Activated CD8-positive, alpha-beta T cell treated with anti-CD3 and anti-CD28 coated beads for 36 hours (primary cell): ENCODE measurements at regions of chr11 and their contacts with region 1.

Region 1: GRCh38 chr11:123407130-123407995 is 22.7 kb upstream of the GRAMD1B start:
- DNase-seq: peak; percentile 80
- ATAC-seq: peak; percentile 74
- H3K4me3 Mint-ChIP-seq: peak overlapping the region; percentile 29
- H3K27ac Mint-ChIP-seq: no peak overlapping the region
- H3K4me1 Mint-ChIP-seq: peaks cover 13% of the 10 kb centered on the region
- H3K27me3 Mint-ChIP-seq: peaks cover 16% of the 10 kb centered on the region
- CTCF ChIP-seq: peak; percentile 77

Region 2: GRCh38 chr11:123301696-123302400 is 105.5 kb before region 1 on chr11:
- CTCF ChIA-PET with region 1: interaction called, 39 read pairs
- POLR2A ChIA-PET with region 1: no interaction called
- intact Hi-C with region 1: no loop called
- DNase-seq: peak; percentile 80
- ATAC-seq: peak; percentile 80
- H3K4me3 Mint-ChIP-seq: peak overlapping the region; percentile 12
- H3K27ac Mint-ChIP-seq: peak overlapping the region; percentile 77
- H3K4me1 Mint-ChIP-seq: peaks cover 37% of the 10 kb centered on the region
- H3K27me3 Mint-ChIP-seq: peaks cover 18% of the 10 kb centered on the region
- CTCF ChIP-seq: peak; percentile 87

Region 3: DNA sequence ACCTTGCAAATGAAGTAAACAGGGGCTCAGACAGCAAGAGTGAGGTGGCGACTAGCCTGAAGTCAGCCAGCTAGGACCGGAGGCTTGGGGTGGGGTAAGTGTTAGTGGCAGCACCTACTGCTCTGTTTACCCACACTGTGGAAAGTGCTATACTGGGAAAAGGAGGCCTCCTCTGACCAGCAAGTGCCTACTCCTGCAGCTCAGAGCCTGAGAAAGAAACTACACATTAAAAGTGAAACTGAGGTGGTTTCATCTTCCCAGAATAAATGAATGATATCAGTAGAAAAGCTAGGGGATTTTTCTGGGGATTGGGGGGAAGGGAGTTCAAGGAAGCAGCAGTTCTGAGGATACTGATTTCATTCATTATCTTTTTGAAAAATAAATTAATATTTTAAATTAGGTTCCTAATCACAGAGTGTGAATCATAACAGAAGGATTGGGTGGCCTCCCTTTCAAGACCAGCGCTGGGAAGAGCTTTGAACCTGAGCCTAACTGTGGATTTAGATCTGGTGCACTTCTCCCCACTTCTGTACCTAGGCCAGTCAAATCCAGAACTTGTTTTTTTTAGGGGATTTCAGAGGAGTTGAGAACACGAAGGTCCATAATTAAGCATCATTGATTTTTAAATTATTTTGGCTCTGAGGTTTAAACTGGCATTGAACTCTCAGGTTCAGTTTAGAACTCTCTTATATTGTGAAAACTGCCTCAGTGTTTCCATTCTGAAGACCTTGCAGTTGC is 25.4 kb before region 1 on chr11:
- CTCF ChIA-PET with region 1: interaction called, 28 read pairs
- POLR2A ChIA-PET with region 1: interaction called, 4 read pairs
- intact Hi-C with region 1: no loop called
- DNase-seq: peak; percentile 83
- ATAC-seq: peak; percentile 91
- H3K4me3 Mint-ChIP-seq: peak overlapping the region; percentile 52
- H3K27ac Mint-ChIP-seq: no peak overlapping the region
- H3K4me1 Mint-ChIP-seq: peaks cover 16% of the 10 kb centered on the region
- H3K27me3 Mint-ChIP-seq: peaks cover 3% of the 10 kb centered on the region
- CTCF ChIP-seq: no peak

Region 4: DNA sequence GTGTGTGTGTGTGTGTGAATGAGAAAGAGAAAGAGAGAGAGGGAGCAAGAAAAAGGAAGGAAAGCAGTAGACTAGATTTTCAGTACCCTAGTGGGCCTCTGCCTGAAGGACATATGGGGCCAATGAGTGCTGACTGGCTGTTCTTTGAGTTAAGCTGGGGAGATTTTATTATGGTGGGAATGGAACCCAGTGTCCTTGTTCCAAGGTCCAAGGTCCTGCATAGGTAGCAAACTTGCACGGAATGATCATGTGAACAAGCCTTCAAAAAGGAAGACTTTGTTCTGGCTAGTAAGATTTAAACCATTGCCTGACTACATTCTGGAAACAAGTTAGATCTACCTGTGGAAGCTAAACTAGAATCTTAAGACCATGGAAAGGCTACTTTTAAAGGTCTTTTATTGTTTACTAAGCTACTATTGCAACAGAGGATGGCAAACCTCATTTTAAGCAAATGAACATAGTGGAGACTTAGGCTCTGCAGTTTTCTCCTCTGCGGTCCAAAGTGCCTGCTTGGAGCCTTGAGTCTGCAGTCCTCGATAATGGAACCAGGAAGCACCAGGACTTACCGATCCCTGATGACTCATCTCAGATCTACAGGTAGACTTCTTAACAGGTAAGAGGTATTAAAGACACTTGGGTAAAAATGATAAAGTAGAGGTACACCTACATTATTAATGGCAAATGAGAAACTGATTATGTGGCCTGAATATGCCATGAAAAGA is 12.5 kb after region 1 on chr11:
- CTCF ChIA-PET with region 1: interaction called, 38 read pairs
- POLR2A ChIA-PET with region 1: interaction called, 4 read pairs
- intact Hi-C with region 1: no loop called
- DNase-seq: no peak
- ATAC-seq: no peak
- H3K4me3 Mint-ChIP-seq: no peak overlapping the region
- H3K27ac Mint-ChIP-seq: no peak overlapping the region
- H3K4me1 Mint-ChIP-seq: no peaks in the 10 kb centered on the region
- H3K27me3 Mint-ChIP-seq: peaks cover 22% of the 10 kb centered on the region
- CTCF ChIP-seq: no peak

Region 5: DNA sequence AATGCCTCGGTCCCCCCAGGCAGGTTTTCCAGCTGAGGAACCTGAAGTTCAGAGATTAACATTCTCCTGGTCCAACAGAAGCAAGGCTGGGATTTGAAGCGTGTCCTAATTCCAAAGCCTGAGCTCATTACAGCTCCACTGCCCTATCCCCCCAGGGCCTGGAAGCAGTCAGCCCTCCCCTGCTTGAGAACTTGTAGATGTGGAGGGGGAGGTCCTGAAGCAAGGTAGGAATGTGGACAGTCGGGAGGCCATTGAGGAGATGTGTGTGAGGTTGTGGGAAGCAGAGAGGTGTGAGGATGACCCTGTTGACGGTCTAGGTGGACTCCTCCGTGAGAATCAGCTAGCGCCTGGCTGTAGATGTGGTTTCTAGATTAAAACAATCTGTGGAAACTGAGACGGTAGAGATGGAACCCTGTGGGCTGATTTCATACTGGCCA is 30.8 kb after region 1 on chr11:
- CTCF ChIA-PET with region 1: interaction called, 46 read pairs
- POLR2A ChIA-PET with region 1: interaction called, 4 read pairs
- intact Hi-C with region 1: no loop called
- DNase-seq: no peak
- ATAC-seq: peak; percentile 9
- H3K4me3 Mint-ChIP-seq: no peak overlapping the region
- H3K27ac Mint-ChIP-seq: peak overlapping the region; percentile 77
- H3K4me1 Mint-ChIP-seq: peaks cover 44% of the 10 kb centered on the region
- H3K27me3 Mint-ChIP-seq: no peaks in the 10 kb centered on the region
- CTCF ChIP-seq: no peak